ENCODE measurements at regions of chr14 and their contacts with region 1.

Region 1: GRCh38 chr14:39169541-39169900 is 612 bp downstream of the TRAPPC6B start:
- DNase-seq: no peak
- ATAC-seq: no peak
- H3K4me3 Mint-ChIP-seq: peak overlapping the region; percentile 87
- H3K27ac Mint-ChIP-seq: peak overlapping the region; percentile 89
- H3K4me1 Mint-ChIP-seq: peaks cover 48% of the 10 kb centered on the region
- H3K27me3 Mint-ChIP-seq: no peaks in the 10 kb centered on the region

Region 2: GRCh38 chr14:39181026-39181692 is 11.6 kb after region 1 on chr14:
- CTCF ChIA-PET with region 1: interaction called, 3 read pairs
- POLR2A ChIA-PET with region 1: interaction called, 12 read pairs
- intact Hi-C with region 1: no loop called
- DNase-seq: no peak
- ATAC-seq: peak; percentile 17
- H3K4me3 Mint-ChIP-seq: no peak overlapping the region
- H3K27ac Mint-ChIP-seq: no peak overlapping the region
- H3K4me1 Mint-ChIP-seq: peaks cover 28% of the 10 kb centered on the region
- H3K27me3 Mint-ChIP-seq: no peaks in the 10 kb centered on the region